ENCODE measurements at regions of chr10 and their contacts with region 1.

Region 1: DNA sequence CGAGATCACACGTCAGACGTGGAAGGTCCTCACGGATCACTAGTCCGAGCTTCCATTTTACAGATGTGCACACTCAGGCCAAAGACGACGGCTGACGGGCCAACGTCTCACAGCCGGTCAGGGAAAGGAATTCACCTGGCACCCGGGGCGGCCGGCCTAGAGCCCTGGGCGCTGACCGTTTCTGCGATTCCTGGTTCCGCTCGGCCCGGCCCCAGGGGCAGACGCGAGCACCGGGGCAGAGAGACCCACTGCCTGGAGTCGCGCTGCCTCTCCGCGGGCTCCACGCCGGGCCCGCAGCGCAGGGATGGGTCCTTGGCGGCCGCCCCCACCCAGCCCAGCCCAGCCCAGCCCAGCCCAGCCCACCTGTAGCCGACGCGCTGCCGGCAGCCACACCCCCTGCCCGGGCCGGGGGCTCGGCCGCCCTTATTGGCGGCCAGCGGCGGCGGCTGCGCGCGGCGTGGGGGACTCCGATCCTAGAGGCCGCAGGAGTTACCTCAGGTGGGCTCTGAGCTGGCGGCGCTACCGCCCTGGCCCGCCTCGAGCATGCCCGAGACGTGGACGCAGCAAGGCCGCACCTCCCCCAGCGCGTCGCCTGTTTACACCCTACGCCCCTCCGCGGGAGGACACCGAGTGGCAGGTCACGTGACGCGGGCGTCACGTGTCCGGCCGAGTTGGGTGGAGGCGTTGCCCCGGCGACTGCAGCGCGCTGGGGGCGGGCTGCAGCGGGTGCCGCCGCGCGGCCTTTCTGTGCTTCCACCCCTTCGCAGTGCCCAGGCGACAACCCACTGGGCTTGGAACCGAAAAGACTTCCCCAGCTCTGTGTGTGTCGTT is 78.1 kb downstream of the ZFAND4 start:
- DNase-seq: peak; percentile 90
- H3K4me3 ChIP-seq: peak overlapping the region; percentile 72 to 84
- H3K27ac ChIP-seq: peak overlapping the region; percentile 76 to 79
- H3K4me1 ChIP-seq: no peaks in the 10 kb centered on the region
- H3K27me3 ChIP-seq: no peaks in the 10 kb centered on the region
- CTCF ChIP-seq: peak in 2 of 4 experiments; percentile 36 to 43
- POLR2A ChIP-seq: peak; percentile 80

Region 2: DNA sequence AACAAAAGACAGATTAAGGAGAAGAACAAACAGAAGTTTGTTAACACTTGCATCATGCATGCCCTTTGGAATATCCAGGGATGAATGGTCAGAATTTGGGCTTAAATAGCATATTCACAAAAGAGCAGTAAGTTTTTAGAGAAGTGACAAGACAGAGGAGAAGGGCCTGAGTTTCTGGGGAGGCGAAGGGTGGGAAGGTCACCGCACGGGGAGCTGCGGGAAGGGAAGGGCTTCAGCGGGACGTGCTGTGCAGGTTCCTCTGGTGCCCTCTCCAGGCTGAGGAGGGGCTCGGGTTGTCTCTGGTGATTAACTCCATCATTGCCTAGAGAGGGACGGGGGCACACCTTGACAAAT is 604.2 kb before region 1 on chr10:
- intact Hi-C with region 1: loop called (anchors 10 kb)
- DNase-seq: no peak
- H3K4me3 ChIP-seq: no peak overlapping the region
- H3K27ac ChIP-seq: no peak overlapping the region
- H3K4me1 ChIP-seq: peaks cover 6% of the 10 kb centered on the region
- H3K27me3 ChIP-seq: no peaks in the 10 kb centered on the region
- CTCF ChIP-seq: peak in 1 of 4 experiments; percentile 20
- POLR2A ChIP-seq: no peak

Region 3: GRCh38 chr10:45470098-45471012 is 124.1 kb before region 1 on chr10:
- intact Hi-C with region 1: loop called (anchors 5 kb)
- DNase-seq: peak; percentile 46
- H3K4me3 ChIP-seq: no peak overlapping the region
- H3K27ac ChIP-seq: peak overlapping the region in 1 of 2 donors; percentile 11
- H3K4me1 ChIP-seq: peaks cover 12% of the 10 kb centered on the region
- H3K27me3 ChIP-seq: no peaks in the 10 kb centered on the region
- CTCF ChIP-seq: no peak
- POLR2A ChIP-seq: no peak

Region 4: DNA sequence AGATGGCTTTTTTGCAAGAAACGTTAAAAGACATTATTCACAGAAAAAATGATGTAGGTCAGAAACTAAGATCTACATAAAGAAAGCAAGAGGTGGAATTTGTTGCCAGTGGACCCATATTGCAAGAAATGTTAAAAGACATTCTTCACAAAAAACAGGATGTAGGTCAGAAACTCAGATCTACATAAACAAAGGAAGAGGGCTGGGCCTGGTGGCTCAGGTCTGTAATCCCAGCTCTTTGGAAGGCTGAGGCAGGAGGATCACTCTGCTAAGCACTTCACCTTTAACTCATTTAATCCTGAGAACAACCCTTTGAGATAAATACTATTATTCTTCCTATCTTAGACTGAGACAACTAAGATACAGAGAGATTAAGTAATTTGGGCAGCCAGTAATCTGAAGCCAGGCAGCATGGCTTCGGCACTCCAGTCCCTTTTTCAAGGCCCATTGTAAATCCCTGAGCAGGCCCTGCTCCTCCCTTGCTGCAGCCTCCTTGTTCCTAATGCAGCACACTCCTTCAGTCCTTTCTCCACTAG is 66.5 kb after region 1 on chr10:
- intact Hi-C with region 1: loop called (anchors 10 kb)
- DNase-seq: no peak
- H3K4me3 ChIP-seq: no peak overlapping the region
- H3K27ac ChIP-seq: no peak overlapping the region
- H3K4me1 ChIP-seq: no peaks in the 10 kb centered on the region
- H3K27me3 ChIP-seq: no peaks in the 10 kb centered on the region
- CTCF ChIP-seq: no peak
- POLR2A ChIP-seq: no peak

Measured in prostate gland (tissue), 2 donors.